Prostate gland (tissue), 2 donors: ENCODE measurements at regions of chr13 and their contacts with region 1.

Region 1: GRCh38 chr13:113816946-113817859 is 46.7 kb downstream of the GAS6 start:
- DNase-seq: peak; percentile 88
- H3K4me3 ChIP-seq: no peak overlapping the region
- H3K27ac ChIP-seq: peak overlapping the region in 1 of 2 donors; percentile 8
- H3K4me1 ChIP-seq: peaks cover 14% of the 10 kb centered on the region
- H3K27me3 ChIP-seq: no peaks in the 10 kb centered on the region
- CTCF ChIP-seq: peak; percentile 61 to 93 (median 86)
- POLR2A ChIP-seq: no peak

Region 2: GRCh38 chr13:113837554-113838355 is 20.6 kb after region 1 on chr13:
- intact Hi-C with region 1: loop called (anchors 1 kb)
- DNase-seq: peak; percentile 95
- H3K4me3 ChIP-seq: peak overlapping the region in 1 of 2 donors; percentile 7
- H3K27ac ChIP-seq: peak overlapping the region; percentile 86 to 90
- H3K4me1 ChIP-seq: peaks cover 18% of the 10 kb centered on the region
- H3K27me3 ChIP-seq: peaks cover 4% of the 10 kb centered on the region
- CTCF ChIP-seq: no peak
- POLR2A ChIP-seq: peak; percentile 37

Region 3: DNA sequence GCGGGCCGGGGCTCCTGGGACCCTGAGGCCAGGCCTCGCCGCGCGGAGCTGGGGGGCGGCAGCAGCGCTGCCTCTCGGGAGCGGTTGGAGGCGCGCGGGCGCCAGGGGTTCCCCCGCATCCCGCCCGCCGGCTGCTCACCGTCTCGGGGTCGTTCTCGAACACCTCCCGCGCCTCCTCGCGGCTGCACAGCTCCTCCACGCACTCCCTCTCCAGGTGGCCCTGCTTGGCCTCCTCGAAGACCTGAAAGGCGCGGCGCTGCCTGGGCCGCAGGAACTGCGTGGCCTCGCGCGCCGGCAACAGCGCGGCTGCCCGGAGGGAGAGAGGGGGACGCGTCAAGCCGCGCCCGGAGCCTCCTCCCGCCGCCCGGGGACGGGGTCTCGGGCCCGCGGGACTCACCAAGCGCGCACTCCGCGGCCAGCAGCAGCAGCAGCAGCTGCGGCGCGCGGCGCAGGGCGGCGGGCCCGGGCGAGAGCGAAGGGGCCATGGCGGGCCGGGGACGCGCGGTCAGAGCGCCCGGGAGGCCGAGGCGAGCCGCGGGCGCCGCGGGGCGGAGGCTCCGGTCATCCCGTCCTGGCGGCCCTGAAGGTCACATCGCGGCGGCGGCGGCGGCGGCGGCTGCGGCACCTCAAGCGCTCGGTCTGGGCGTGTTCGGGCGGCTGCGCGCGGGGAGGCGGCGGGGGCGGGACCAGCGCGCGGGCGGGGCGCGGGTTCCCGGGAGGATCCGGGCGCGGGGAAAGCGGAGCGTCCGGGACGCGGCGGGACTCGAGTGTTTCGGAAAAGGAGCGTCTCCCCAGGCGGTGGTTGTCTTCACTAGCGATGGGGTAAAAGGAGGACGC is 46.5 kb after region 1 on chr13 and contains the start of gene GAS6:
- intact Hi-C with region 1: loop called (anchors 5 kb)
- DNase-seq: peak; percentile 55
- H3K4me3 ChIP-seq: peak within 1 kb of the TSS; percentile 57 to 59
- H3K27ac ChIP-seq: peak within 1 kb of the TSS; percentile 80 to 81
- H3K4me1 ChIP-seq: no peaks in the 10 kb centered on the region
- H3K27me3 ChIP-seq: no peaks in the 10 kb centered on the region
- CTCF ChIP-seq: peak in 1 of 4 experiments; percentile 28
- POLR2A ChIP-seq: no peak
- total RNA-seq, gene GAS6: 116 to 432 TPM

Region 4: GRCh38 chr13:113904411-113904810 is 87.2 kb after region 1 on chr13:
- intact Hi-C with region 1: loop called (anchors 2 kb)
- DNase-seq: no peak
- H3K4me3 ChIP-seq: no peak overlapping the region
- H3K27ac ChIP-seq: no peak overlapping the region
- H3K4me1 ChIP-seq: no peaks in the 10 kb centered on the region
- H3K27me3 ChIP-seq: no peaks in the 10 kb centered on the region
- CTCF ChIP-seq: peak in 3 of 4 experiments; percentile 33 to 56 (median 42)
- POLR2A ChIP-seq: no peak

Region 5: GRCh38 chr13:113951246-113951999 is 134.2 kb after region 1 on chr13:
- intact Hi-C with region 1: loop called (anchors 2 kb)
- DNase-seq: peak; percentile 85
- H3K4me3 ChIP-seq: no peak overlapping the region
- H3K27ac ChIP-seq: no peak overlapping the region
- H3K4me1 ChIP-seq: no peaks in the 10 kb centered on the region
- H3K27me3 ChIP-seq: no peaks in the 10 kb centered on the region
- CTCF ChIP-seq: peak; percentile 65 to 99 (median 95)
- POLR2A ChIP-seq: no peak

Region 6: DNA sequence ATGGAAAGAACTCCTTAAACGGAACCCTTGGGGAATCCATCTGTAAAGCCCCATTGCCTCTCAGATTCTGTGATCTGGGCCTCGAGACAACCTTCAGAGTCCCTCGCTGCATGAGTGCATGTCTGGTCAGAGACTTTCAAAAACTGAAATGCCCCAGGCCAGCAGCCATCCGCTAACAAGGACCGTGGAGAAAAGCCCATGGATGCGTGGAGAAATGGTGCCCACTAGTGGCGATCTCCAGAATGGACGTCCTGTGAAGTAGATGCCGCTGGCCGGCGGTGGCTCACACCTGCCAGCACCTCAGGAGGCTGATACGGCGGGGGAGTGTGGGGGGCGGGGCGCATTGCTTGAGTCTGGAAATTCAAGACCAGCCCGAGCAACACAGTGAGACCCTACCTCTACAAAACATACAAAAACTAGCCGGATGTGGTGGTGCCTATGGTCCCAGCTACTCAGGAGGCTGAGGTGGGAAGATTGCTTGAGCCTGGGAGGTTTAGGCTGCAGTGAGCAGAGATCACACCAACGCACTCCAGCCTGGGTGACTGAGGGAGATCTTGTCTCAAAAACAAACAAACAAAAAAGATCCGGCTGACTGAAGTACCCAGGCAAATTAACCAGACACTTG is 409.6 kb after region 1 on chr13:
- intact Hi-C with region 1: loop called (anchors 2 kb)
- DNase-seq: peak; percentile 81
- H3K4me3 ChIP-seq: no peak overlapping the region
- H3K27ac ChIP-seq: no peak overlapping the region
- H3K4me1 ChIP-seq: peaks cover 5% of the 10 kb centered on the region
- H3K27me3 ChIP-seq: no peaks in the 10 kb centered on the region
- CTCF ChIP-seq: peak; percentile 90 to 98 (median 94)
- POLR2A ChIP-seq: no peak